ENCODE measurements at regions of chr21 and their contacts with region 1.

Region 1: GRCh38 chr21:31731802-31732596 is at the start of gene SCAF4:
- DNase-seq: peak; percentile 28
- ATAC-seq: peak; percentile 89
- H3K4me3 ChIP-seq: peak within 1 kb of the TSS; percentile 94
- H3K27ac ChIP-seq: peak within 1 kb of the TSS; percentile 77
- H3K4me1 ChIP-seq: peaks cover 24% of the 10 kb centered on the region
- H3K27me3 ChIP-seq: no peaks in the 10 kb centered on the region
- CTCF ChIP-seq: no peak
- EP300 ChIP-seq: no peak
- POLR2A ChIP-seq: peak; percentile 97
- RAD21 ChIP-seq: no peak
- polyA plus RNA-seq, gene SCAF4: 4.3 to 4.6 TPM

Region 2: GRCh38 chr21:31659536-31660258 is 72.3 kb before region 1 on chr21 and contains the start of gene SOD1:
- CTCF ChIA-PET with region 1: no interaction called
- POLR2A ChIA-PET with region 1: no interaction called
- RAD21 ChIA-PET with region 1: no interaction called
- SMC1A ChIA-PET with region 1: no interaction called
- in situ Hi-C with region 1: no loop called
- intact Hi-C with region 1: loop called (anchors 2 kb)
- DNase-seq: peak; percentile 75
- ATAC-seq: peak; percentile 96
- H3K4me3 ChIP-seq: peak within 1 kb of the TSS; percentile 95
- H3K27ac ChIP-seq: peak within 1 kb of the TSS; percentile 80
- H3K4me1 ChIP-seq: peaks cover 9% of the 10 kb centered on the region
- H3K27me3 ChIP-seq: no peaks in the 10 kb centered on the region
- CTCF ChIP-seq: no peak
- EP300 ChIP-seq: no peak
- POLR2A ChIP-seq: peak; percentile 100
- RAD21 ChIP-seq: no peak
- polyA plus RNA-seq, gene SOD1: 655 to 710 TPM

Region 3: DNA sequence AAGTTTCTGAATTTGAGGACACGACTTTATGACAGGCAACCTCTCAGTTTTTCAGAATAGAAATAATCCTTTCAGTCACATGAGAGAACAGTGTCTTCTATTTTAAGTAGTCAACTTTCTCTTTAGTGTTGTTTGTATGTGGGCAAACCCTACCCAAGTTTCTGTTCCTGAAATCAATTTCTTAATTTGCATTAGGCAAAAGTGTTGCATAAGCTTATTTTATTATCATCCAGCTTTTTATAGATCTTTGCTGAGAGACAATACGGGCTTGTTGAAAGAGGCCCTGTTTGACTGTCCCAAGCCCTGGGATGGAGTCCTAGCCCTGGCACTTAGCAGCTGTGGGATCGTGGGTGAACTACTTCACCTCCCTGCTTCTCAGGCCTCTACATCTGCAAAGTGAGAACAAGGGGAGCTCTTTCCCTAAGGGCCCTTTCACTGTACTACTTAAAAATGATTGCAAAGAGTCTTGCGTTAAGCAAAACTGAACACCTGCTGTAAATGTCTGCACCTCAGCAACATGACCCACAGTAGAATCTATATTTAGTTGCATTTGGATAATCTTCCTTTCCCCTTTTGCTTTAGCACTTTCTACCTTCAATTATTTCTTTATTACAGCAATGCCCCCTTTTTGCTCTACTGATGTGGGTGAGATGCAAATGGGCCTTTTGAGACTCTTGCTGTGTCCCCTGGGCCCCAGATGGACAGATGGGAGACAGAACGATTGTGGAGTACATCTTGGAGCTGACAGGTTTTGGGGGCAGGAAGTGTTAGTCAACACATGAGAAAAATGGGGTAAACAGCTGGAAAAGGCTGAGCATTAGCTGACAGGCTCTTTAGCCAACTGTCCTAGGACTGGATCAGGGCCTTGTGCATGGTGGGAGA is 40.9 kb after region 1 on chr21:
- CTCF ChIA-PET with region 1: no interaction called
- POLR2A ChIA-PET with region 1: interaction called, 6 read pairs
- RAD21 ChIA-PET with region 1: interaction called, 5 read pairs
- SMC1A ChIA-PET with region 1: interaction called, 21 read pairs
- in situ Hi-C with region 1: no loop called
- intact Hi-C with region 1: no loop called
- DNase-seq: peak; percentile 63
- ATAC-seq: peak; percentile 93
- H3K4me3 ChIP-seq: no peak overlapping the region
- H3K27ac ChIP-seq: peak overlapping the region; percentile 62
- H3K4me1 ChIP-seq: peaks cover 15% of the 10 kb centered on the region
- H3K27me3 ChIP-seq: no peaks in the 10 kb centered on the region
- CTCF ChIP-seq: no peak
- EP300 ChIP-seq: peak in 1 of 2 experiments; percentile 63; a peak in 1 of 4 replicates
- POLR2A ChIP-seq: no peak
- RAD21 ChIP-seq: no peak

Measured in GM12878 (cell line).